ENCODE measurements at regions of chr2 and their contacts with region 1.

Region 1: DNA sequence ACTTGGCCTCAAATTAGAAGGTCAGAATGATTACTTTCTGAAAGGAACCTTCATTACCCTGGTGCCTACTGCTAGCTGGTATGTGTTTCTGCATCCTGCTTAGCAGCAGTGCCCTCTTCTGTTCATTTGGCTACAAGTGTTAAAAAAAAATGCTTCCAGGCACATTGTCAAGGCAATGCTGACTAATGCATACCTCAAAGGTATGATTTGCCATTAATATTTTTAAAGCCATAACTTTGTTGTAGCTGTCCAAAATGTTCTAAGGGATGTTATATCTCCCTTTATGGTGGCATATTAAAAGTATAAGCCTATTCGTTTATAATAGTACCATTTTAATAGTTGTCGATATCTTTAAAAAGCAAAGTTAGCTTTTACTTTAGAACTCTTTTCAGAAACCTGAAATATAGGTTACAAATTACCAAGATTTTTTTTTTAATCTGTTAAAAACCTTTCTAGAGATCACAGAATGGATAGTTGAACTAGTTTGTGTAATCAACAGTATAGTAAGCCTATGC is 52.0 kb upstream of the FAM171B start:
- DNase-seq: peak; percentile 53

Region 2: GRCh38 chr2:186503848-186504606 is 137.8 kb before region 1 on chr2:
- CTCF ChIA-PET with region 1: interaction called, 16 read pairs
- POLR2A ChIA-PET with region 1: no interaction called
- DNase-seq: no peak

Region 3: GRCh38 chr2:186589612-186590349 is 52.1 kb before region 1 on chr2 and contains the start of gene ITGAV:
- CTCF ChIA-PET with region 1: no interaction called
- POLR2A ChIA-PET with region 1: interaction called, 11 read pairs
- DNase-seq: peak; percentile 83

Region 4: GRCh38 chr2:186695081-186695756 is 53.4 kb after region 1 on chr2:
- CTCF ChIA-PET with region 1: no interaction called
- POLR2A ChIA-PET with region 1: no interaction called
- DNase-seq: peak; percentile 11

Measured in HEK293T (cell line).